HCT116 (cell line): ENCODE measurements at regions of chr6 and their contacts with region 1.

Region 1: DNA sequence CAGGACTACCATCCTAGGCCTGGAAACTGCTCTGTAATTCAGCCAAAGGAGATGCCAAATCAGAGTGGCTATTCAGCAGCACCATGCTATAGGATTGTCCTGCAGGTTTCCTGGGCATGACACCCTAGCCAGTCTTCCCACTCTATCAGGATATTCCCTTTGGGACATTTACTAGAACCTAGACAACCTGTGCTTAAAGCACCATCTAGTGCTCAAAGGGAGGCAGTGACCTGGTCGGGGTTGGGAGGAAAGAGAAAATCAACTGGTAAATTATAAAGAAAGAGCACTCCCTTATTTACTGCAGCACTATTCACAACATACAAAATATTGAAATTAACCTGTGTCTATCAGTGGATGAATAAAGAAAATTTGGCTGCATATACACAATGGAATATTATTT is 67.2 kb upstream of the SMLR1 start:
- DNase-seq: peak; percentile 44
- ATAC-seq: peak; percentile 98
- H3K4me3 ChIP-seq: no peak overlapping the region
- H3K27ac ChIP-seq: no peak overlapping the region
- H3K4me1 ChIP-seq: no peaks in the 10 kb centered on the region
- H3K27me3 ChIP-seq: no peaks in the 10 kb centered on the region
- CTCF ChIP-seq: peak; percentile 69 to 89 (median 74); a peak in 5 of 6 replicates
- POLR2A ChIP-seq: no peak
- RAD21 ChIP-seq: peak; percentile 90

Region 2: GRCh38 chr6:130037207-130037811 is 722.7 kb before region 1 on chr6:
- CTCF ChIA-PET with region 1: no interaction called
- POLR2A ChIA-PET with region 1: no interaction called
- RAD21 ChIA-PET with region 1: no interaction called
- intact Hi-C with region 1: loop called (anchors 2 kb)
- DNase-seq: no peak
- ATAC-seq: no peak
- H3K4me3 ChIP-seq: no peak overlapping the region
- H3K27ac ChIP-seq: no peak overlapping the region
- H3K4me1 ChIP-seq: peaks cover 23 to 26% of the 10 kb centered on the region in 2 experiments
- H3K27me3 ChIP-seq: no peaks in the 10 kb centered on the region
- CTCF ChIP-seq: peak; percentile 35 to 67 (median 39); a peak in 4 of 6 replicates
- POLR2A ChIP-seq: no peak
- RAD21 ChIP-seq: peak; percentile 37; the same call in 1 of the 2 replicates

Region 3: DNA sequence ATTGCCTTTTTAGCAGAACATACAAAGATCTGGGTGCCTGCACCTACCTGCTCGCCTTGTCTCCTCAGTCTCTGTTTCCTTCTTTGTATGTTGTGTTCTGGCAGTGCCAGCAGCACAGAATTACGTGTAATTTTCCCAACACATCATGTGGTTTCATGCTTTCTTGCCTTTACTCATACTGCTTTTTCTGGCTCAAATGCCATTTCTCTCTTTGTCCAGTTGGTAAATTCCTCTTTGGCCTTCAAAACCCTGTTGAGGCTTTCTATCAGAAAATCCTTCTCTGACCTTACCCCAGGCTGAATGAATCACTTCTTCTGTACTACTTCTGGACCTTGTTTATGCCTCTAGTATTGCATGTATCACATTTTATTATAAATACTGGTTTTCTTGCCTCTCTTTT is 709.8 kb before region 1 on chr6:
- CTCF ChIA-PET with region 1: no interaction called
- POLR2A ChIA-PET with region 1: no interaction called
- RAD21 ChIA-PET with region 1: no interaction called
- intact Hi-C with region 1: loop called (anchors 5 kb)
- DNase-seq: no peak
- ATAC-seq: no peak
- H3K4me3 ChIP-seq: no peak overlapping the region
- H3K27ac ChIP-seq: no peak overlapping the region
- H3K4me1 ChIP-seq: no peaks in the 10 kb centered on the region
- H3K27me3 ChIP-seq: no peaks in the 10 kb centered on the region
- CTCF ChIP-seq: no peak
- POLR2A ChIP-seq: no peak
- RAD21 ChIP-seq: no peak

Region 4: GRCh38 chr6:130293800-130294199 is 466.2 kb before region 1 on chr6:
- CTCF ChIA-PET with region 1: interaction called, 4 read pairs
- POLR2A ChIA-PET with region 1: no interaction called
- RAD21 ChIA-PET with region 1: no interaction called
- intact Hi-C with region 1: loop called (anchors 2 kb)
- DNase-seq: peak; percentile 45
- ATAC-seq: peak; percentile 99
- H3K4me3 ChIP-seq: no peak overlapping the region
- H3K27ac ChIP-seq: no peak overlapping the region
- H3K4me1 ChIP-seq: no peaks in the 10 kb centered on the region
- H3K27me3 ChIP-seq: no peaks in the 10 kb centered on the region
- CTCF ChIP-seq: peak; percentile 58 to 72 (median 67); a peak in 5 of 6 replicates
- POLR2A ChIP-seq: no peak
- RAD21 ChIP-seq: peak; percentile 74

Region 5: DNA sequence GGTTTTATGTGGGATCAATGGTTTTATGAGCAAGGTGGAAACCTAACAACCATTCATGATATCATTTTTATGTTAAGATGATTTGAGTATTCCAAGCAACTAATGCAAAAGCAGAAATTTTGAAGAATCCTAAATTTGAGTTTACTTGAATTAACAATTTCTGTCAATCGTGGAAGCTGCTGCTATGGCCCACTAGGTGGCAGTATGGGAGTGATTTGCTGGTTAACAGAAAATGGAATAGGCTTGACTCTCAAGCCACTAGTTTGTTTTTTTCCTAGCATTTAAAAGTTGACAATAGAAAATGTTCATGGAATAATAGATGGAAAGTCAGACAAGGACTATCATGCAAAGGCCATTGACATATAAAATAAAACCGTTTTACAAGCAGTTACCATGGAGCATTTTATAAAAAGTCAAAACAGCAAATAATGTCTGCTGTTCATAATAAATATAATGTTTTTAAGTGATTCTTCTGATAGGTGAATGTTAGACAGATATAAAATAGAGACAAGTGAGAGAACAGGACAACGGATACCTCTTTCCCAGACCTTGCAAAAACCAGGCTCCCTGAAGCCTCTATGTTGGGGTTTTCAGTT is 437.2 kb before region 1 on chr6:
- CTCF ChIA-PET with region 1: no interaction called
- POLR2A ChIA-PET with region 1: no interaction called
- RAD21 ChIA-PET with region 1: no interaction called
- intact Hi-C with region 1: loop called (anchors 5 kb)
- DNase-seq: peak; percentile 48
- ATAC-seq: peak; percentile 77
- H3K4me3 ChIP-seq: no peak overlapping the region
- H3K27ac ChIP-seq: no peak overlapping the region; the same call in 1 of the 2 replicates
- H3K4me1 ChIP-seq: no peaks in the 10 kb centered on the region; a peak in 1 of 4 replicates
- H3K27me3 ChIP-seq: no peaks in the 10 kb centered on the region
- CTCF ChIP-seq: peak; percentile 83 to 95 (median 90)
- POLR2A ChIP-seq: no peak
- RAD21 ChIP-seq: peak; percentile 95

Region 6: GRCh38 chr6:130749402-130749801 is 10.6 kb before region 1 on chr6:
- CTCF ChIA-PET with region 1: no interaction called
- POLR2A ChIA-PET with region 1: no interaction called
- RAD21 ChIA-PET with region 1: no interaction called
- intact Hi-C with region 1: no loop called
- DNase-seq: no peak
- ATAC-seq: peak; percentile 34; the same call in 1 of the 2 replicates
- H3K4me3 ChIP-seq: no peak overlapping the region
- H3K27ac ChIP-seq: no peak overlapping the region
- H3K4me1 ChIP-seq: no peaks in the 10 kb centered on the region
- H3K27me3 ChIP-seq: no peaks in the 10 kb centered on the region
- CTCF ChIP-seq: peak in 2 of 3 experiments; percentile 21 to 27; a peak in 3 of 6 replicates
- POLR2A ChIP-seq: no peak
- RAD21 ChIP-seq: no peak

Region 7: GRCh38 chr6:130945401-130945919 is 185.5 kb after region 1 on chr6:
- CTCF ChIA-PET with region 1: no interaction called
- POLR2A ChIA-PET with region 1: no interaction called
- RAD21 ChIA-PET with region 1: no interaction called
- intact Hi-C with region 1: no loop called
- DNase-seq: no peak
- ATAC-seq: no peak
- H3K4me3 ChIP-seq: no peak overlapping the region
- H3K27ac ChIP-seq: no peak overlapping the region
- H3K4me1 ChIP-seq: no peaks in the 10 kb centered on the region
- H3K27me3 ChIP-seq: no peaks in the 10 kb centered on the region
- CTCF ChIP-seq: no peak
- POLR2A ChIP-seq: no peak
- RAD21 ChIP-seq: no peak